Activated T-helper 1 cell treated with anti-CD3 and anti-CD28 coated beads, Interleukin-12 subunit alpha, Interleukin-12 subunit beta, Interleukin-2, Interleukin-4 antibody, amounts not matched to agents 30 ng/mL and 10 ng/mL and 1 ng/mL, durations not matched to agents 14 hours and 24 hours and 36 hours (primary cell): ENCODE measurements at regions of chr15 and their contacts with region 1.

Region 1: DNA sequence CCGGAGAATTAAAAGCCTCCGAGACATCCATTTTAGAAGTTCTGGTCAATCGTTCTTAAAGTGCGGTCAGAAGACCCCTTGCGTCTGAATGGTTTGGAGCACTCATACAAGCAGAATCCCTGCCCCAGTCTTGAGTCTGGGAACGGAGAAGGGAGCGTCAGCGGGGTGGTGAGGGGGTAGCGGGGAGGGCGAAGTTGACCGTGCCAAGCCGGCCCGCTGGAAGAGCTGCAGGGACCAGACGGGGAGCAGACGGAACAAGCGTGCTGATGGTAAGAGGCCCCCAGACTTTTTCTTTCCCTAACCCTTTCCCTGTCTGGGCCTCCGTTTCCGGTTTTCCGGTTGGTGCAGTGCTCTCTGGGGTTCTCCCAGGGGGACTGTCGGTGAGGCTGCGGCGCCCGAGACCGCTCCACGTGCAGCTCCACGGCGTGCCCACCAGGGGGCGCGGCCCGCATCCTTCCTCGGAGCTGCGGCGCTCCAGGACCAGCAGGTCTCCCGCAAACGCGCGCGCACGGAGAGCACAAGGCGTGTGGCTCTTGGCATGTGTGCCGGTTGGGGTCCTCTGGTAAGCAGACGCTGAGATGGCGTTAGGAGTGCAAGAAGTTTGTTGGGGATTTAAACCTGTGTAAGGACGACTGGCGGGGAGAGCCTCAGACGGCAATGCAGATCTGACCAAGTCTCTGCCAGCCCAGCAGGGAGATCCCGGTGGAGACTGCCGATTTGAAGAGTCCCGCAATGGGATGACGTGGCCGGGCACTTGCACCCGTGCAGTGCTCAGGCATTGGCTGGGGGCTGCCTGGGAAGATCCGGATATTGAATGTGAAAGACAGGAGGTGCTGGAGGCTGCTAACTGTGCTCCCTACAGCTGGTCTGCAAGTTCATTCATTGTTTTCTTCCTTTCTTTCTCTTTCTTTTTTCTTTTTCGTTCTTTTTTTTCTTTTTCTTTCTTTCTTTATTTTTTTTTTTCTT is 19.2 kb upstream of the CORO2B start:
- DNase-seq: peak; percentile 63
- H3K4me3 Mint-ChIP-seq: peak overlapping the region; percentile 65
- H3K27ac Mint-ChIP-seq: no peak overlapping the region
- H3K4me1 Mint-ChIP-seq: peaks cover 18% of the 10 kb centered on the region
- H3K27me3 Mint-ChIP-seq: peaks cover 56% of the 10 kb centered on the region

Region 2: DNA sequence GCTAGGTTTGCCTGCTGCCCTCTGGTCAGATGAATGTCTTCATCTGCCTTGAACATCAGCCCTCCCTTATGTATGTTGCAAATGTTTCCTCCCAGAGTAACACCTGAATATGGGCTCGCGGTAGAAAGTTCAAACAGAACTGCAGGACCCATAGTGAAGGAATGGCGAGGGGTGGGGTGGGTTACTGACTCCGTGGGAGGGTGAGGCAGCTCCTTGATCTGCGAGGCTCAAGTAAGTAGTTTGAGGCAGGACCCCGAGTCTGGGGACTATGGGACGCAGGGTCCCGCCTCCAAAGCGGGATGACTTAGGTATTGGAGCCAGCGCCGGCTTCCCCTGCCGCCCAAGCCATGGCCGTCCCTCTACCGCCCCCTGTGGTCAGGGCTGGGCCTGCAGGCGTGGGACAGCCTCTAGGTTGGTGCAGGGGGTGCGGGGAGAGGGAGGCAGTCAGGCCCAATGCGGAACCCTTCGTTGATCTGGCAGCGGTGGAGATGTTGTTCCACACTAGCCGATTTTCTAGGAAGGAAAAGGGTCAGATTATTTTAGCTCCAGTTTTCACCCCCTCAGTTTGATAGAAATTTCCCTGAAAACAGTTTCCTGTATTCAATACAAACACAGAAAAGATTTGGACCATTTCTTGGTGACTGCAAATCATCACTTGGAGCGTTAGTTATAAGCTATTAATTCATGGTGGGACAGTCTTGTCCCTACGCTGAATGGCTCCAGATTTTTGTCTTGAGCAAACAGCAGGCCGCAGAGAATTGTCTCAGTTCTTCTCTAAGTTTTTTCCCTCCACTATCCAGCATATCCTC is 91.5 kb after region 1 on chr15:
- intact Hi-C with region 1: loop called (anchors 5 kb)
- DNase-seq: peak; percentile 29
- H3K4me3 Mint-ChIP-seq: no peak overlapping the region
- H3K27ac Mint-ChIP-seq: no peak overlapping the region
- H3K4me1 Mint-ChIP-seq: no peaks in the 10 kb centered on the region
- H3K27me3 Mint-ChIP-seq: peaks cover 8% of the 10 kb centered on the region

Region 3: DNA sequence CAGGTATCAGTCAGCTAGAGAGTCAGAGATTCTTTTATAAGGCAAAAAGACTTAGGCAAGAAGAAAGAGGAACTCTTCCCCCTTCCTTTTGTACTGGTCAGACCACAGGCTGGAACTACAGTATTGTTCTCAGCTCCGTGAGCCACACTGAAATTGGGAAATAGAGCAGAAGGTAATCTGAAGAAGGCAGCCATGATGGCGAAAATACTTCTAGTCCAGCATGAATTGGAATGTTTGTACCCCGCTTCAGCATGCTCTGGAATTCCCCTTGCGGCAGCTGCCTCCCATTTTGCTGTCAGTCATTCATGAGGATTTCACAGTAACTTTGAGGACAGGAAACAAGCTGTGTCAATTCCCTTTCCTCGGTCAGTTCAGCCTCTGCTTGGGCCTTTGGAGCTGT is 115.3 kb after region 1 on chr15:
- intact Hi-C with region 1: loop called (anchors 1 kb)
- DNase-seq: no peak
- H3K4me3 Mint-ChIP-seq: no peak overlapping the region
- H3K27ac Mint-ChIP-seq: no peak overlapping the region
- H3K4me1 Mint-ChIP-seq: no peaks in the 10 kb centered on the region
- H3K27me3 Mint-ChIP-seq: peaks cover 9% of the 10 kb centered on the region

Region 4: GRCh38 chr15:69452692-69453521 is 893.3 kb after region 1 on chr15 and contains the start of gene RPLP1:
- intact Hi-C with region 1: no loop called
- DNase-seq: peak; percentile 93
- H3K4me3 Mint-ChIP-seq: peak within 1 kb of the TSS; percentile 99
- H3K27ac Mint-ChIP-seq: peak within 1 kb of the TSS; percentile 100
- H3K4me1 Mint-ChIP-seq: peaks cover 35% of the 10 kb centered on the region
- H3K27me3 Mint-ChIP-seq: no peaks in the 10 kb centered on the region
- total RNA-seq, gene RPLP1: 1,633 and 1,710 TPM in 2 replicates